Activated CD4-positive, alpha-beta T cell treated with anti-CD3 and anti-CD28 coated beads for 36 hours (primary cell): ENCODE measurements at regions of chr11 and their contacts with region 1.

Region 1: DNA sequence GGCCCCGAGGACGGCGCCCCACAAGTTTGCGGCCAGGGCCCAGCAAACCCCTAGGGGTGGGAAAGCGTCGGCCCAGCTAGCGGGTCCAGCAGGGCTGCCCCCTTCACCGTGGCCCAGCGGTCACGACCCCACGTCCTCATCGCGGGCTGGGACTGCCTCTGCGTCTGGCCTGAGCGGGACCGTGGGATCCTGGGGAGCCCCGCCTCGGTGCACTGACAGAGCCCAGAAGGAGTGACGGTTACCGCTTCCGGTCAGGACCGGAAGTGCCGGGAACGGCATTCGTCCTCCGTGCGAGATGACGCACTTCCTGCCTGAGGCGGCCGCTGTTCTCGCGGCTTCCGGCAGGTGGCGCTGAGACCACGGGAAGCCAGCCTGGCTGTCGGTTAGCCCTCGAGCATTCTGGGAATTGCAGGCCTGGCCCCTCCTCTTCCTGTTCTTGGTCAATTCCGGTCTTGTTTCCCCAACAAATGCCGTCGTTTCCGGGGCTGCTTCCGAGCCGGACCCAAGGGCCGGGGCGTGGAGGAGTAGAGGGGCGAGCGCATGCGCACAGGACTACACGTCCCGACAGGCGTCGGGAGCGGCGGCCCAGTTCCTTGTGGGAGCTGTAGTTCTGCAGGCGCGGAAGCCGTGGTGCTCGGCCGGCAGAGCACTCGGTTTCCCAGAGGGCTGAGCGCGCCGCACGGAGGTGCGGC is at the start of gene TSSC4:
- DNase-seq: peak; percentile 100
- ATAC-seq: peak; percentile 91
- H3K4me3 Mint-ChIP-seq: peak within 1 kb of the TSS; percentile 87
- H3K27ac Mint-ChIP-seq: peak within 1 kb of the TSS; percentile 84
- H3K4me1 Mint-ChIP-seq: peaks cover 16% of the 10 kb centered on the region
- H3K27me3 Mint-ChIP-seq: no peaks in the 10 kb centered on the region
- total RNA-seq, gene TSSC4: 19.8 to 38.4 TPM

Region 2: DNA sequence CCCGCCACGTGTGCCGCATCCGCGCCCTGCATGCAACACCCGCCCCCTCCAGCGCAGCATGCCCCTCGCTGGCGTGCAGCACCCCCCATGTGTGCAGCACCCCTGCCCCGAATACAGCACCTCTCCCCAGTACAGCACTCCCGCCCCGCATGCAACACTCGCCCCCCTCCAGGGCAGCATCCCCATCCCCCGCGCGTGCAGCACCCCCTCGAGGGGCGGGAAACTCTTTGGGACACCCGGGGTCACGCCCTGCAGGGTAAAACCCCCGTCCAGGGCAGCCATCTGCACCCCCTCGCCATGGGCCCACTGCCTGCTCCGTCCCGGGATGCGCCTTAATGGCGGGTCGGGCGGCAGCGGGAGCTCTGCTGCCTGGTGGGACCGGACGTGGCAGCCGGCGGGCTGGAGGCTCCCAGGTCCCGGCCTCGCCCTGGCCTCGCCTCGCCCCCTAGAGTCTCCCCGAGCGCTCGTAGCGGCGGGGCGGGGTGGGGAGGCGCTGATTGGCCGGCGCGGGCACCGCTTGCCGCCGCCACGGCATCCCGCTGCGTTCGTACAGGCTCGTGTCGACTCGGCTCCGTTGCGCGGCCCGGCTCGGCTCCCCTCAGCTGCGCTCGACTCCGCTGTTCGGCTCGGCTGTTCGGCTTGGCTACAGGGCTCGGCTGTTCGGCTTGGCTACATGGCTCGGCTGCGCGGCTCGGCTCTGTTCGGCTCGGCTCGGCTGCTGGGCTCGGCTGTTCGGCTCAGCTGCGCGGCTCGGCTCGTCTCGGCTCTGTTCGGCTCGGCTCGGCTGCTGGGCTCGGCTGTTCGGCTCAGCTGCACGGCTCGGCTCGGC is 1010.9 kb before region 1 on chr11:
- CTCF ChIA-PET with region 1: no interaction called
- POLR2A ChIA-PET with region 1: no interaction called
- intact Hi-C with region 1: loop called in 1 of 2 experiments (anchors 5 kb)
- DNase-seq: peak; percentile 99
- ATAC-seq: peak; percentile 99
- H3K4me3 Mint-ChIP-seq: peak overlapping the region; percentile 53
- H3K27ac Mint-ChIP-seq: no peak overlapping the region
- H3K4me1 Mint-ChIP-seq: peaks cover 9% of the 10 kb centered on the region
- H3K27me3 Mint-ChIP-seq: peaks cover 25% of the 10 kb centered on the region

Region 3: DNA sequence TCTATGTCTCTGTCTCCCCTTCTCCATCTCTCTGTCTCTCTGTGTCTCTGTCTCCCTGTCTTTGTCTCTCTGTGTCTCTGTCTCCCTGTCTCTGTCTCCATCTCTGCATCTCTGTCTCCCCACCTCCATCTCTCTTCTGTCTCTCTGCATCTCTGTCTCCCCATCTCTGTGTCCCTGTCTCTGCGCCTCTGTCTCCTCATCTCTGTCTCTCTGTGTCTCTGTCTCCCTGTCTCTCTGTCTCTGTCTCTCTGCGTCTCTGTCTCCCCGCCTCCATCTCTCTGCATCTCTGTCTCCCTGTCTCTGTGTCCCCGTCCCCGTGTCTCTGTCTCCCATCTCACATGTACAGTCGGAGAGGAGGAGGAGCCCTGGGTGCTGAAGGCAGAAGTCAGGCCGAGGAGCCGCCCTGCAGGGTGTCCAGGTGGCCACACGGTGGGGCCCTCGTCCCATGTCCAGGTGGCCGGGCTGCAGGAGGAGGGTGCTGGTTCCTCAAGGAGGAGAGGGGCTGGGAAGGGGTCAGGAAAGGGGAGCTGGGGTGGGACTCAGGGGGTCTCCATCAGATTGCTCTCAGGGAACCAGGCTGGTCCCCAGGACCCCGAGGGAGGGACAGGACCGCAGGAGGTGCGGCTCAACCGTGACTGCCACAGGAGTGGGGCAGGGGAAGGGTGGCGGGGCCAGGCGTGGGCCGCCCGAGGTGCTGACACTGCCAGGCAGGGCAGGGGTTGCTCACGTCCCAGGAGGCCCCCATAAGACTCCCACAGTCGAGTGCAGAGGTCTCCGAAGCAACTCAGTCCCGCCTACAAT is 203.0 kb before region 1 on chr11:
- CTCF ChIA-PET with region 1: no interaction called
- POLR2A ChIA-PET with region 1: no interaction called
- intact Hi-C with region 1: loop called (anchors 1 to 5 kb)
- DNase-seq: peak; percentile 89
- ATAC-seq: peak; percentile 98
- H3K4me3 Mint-ChIP-seq: no peak overlapping the region
- H3K27ac Mint-ChIP-seq: no peak overlapping the region
- H3K4me1 Mint-ChIP-seq: no peaks in the 10 kb centered on the region
- H3K27me3 Mint-ChIP-seq: peaks cover 8% of the 10 kb centered on the region

Region 4: DNA sequence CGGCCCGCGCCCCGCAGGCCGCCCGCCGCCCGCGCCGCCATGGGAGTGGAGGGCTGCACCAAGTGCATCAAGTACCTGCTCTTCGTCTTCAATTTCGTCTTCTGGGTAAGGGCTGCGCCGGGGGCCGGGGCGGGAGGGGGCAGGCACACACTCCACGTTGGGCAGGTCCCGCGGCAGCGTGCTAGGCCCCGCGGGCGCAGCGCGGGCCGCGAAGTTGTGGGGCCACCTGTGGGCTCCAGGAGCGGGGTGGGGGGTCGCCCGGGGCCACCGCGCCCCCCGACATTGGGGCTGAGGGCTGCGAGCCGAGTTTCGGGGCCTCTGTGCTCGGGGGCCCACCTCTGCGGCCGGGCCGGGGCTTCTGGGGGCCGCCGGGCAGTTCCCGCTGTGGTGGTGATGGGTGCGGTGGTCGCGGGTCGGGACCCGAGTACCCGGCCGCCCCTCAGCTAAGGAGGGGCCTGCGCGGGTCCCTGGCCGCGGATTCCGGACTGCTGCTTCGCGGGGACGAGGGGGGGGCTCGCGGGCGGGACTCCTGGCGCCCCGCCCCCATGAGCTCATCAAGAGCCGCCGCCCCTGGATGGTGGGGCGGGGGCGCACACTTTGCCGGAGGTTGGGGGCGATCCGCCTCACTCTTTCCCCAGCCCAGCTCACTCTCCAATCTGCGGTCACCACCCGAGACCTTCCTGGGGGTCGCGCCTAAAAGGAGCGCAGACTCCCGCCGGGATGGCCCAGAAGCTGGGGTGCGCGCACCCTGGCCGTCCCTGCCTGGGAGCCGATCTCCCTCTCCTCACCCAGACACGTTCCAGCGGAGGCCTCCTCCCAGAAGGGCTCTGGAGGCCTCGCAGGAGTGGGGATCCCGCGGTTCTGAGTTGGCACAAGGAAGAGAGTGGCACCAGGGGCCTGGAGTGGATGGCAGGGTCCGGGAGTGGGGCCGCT is 22.4 kb before region 1 on chr11:
- CTCF ChIA-PET with region 1: interaction called, 5 read pairs
- POLR2A ChIA-PET with region 1: interaction called, 6 read pairs
- intact Hi-C with region 1: loop called (anchors 1 kb)
- DNase-seq: peak; percentile 80
- ATAC-seq: peak; percentile 57
- H3K4me3 Mint-ChIP-seq: peak overlapping the region; percentile 86
- H3K27ac Mint-ChIP-seq: peak overlapping the region; percentile 75
- H3K4me1 Mint-ChIP-seq: peaks cover 28% of the 10 kb centered on the region
- H3K27me3 Mint-ChIP-seq: no peaks in the 10 kb centered on the region

Region 5: DNA sequence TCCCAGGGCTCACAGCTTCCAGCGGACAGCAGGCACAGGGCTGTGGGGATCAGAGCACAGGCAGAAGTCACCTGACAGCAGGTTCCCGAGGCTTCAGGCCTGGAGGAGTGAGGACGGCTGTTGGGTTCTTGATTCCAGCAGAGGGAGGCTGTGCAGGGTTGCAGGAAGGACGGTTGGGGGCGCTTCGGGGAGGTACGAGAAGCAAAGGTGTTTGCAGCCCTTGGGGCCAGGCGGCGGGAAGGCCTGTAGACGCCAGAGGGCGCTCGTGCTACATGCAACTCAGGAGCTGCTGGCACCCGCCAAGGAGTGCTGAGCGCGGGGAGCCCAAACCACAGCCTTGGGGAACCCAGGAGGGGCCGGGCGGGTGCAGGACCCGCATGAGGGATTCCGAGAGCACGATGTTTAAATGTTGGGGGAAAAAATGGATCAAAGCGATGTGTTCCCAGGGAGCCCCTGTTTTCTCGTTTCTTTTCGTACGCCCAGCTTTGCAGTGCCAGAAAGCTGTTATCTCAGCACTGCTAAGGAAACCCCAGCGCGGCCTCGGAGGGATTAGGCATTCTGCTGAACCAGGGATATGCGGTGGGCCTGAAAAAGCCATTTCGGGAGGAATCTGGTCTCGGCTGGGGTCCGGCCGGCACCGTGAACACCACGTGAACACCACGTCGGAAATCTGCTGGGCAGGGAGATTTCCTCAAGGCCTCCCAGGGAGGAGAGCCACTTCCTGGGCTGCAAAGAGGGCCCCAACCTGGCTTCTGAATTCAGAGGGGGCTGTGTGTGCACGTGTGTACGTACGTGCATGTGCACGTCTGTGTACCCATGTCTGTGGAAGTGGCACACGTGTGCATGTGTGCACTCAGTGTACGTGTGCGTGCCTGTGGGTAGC is 132.7 kb after region 1 on chr11:
- CTCF ChIA-PET with region 1: interaction called, 4 read pairs
- POLR2A ChIA-PET with region 1: no interaction called
- intact Hi-C with region 1: loop called in 1 of 2 experiments (anchors 1 kb)
- DNase-seq: peak; percentile 97
- ATAC-seq: peak; percentile 90
- H3K4me3 Mint-ChIP-seq: peak overlapping the region; percentile 48
- H3K27ac Mint-ChIP-seq: no peak overlapping the region
- H3K4me1 Mint-ChIP-seq: peaks cover 15% of the 10 kb centered on the region
- H3K27me3 Mint-ChIP-seq: no peaks in the 10 kb centered on the region

Region 6: DNA sequence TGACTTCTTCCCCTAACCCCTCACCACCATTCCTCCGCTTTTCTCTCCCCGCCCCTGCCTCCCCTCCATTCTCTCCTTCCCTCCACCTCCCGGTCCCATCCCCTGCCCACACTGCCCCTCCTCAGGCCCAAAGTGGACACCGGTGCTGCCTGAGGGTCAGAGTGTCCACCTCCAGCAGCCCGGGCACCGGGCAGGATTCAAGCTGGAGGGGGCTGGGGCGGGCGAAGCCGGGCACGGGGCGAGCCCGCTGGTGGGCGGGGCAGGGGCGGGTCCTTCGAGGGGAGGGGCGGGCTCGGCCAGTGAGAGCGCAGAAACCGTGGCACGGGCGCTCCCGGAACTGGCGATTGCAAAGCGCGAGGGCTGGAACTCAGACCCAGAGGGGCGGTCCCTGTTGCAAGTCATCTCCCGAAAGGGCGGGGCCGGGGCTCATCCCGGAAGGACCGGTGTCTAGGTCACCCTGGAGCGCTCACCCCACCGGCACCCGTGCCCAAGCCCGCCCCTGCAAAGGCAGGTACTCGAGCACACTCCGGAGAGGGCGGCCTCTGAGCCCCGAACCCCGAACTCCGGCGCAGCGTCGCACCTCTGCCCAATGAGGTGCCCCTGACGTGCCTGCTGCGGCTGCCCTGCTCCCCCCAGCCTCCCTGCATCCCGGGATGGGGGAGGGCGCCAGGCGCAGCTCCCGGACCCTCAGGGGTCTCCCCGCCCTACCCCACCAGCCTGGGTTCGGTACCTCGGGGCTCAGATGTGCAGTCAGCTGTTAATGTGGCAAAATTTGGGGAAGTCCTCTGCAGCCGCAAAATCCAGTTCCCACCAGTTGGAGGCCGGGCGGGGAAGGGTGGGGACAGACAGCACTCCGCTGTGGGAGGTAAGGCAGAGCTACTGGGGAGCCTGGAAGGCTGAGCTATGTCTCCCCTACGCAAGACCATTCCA is 501.9 kb after region 1 on chr11:
- CTCF ChIA-PET with region 1: no interaction called
- POLR2A ChIA-PET with region 1: no interaction called
- intact Hi-C with region 1: loop called in 1 of 2 experiments (anchors 1 kb)
- DNase-seq: peak; percentile 98
- ATAC-seq: peak; percentile 96
- H3K4me3 Mint-ChIP-seq: peak overlapping the region; percentile 64
- H3K27ac Mint-ChIP-seq: peak overlapping the region; percentile 22
- H3K4me1 Mint-ChIP-seq: peaks cover 33% of the 10 kb centered on the region
- H3K27me3 Mint-ChIP-seq: no peaks in the 10 kb centered on the region